ENCODE measurements at regions of chr1 and their contacts with region 1.

Region 1: DNA sequence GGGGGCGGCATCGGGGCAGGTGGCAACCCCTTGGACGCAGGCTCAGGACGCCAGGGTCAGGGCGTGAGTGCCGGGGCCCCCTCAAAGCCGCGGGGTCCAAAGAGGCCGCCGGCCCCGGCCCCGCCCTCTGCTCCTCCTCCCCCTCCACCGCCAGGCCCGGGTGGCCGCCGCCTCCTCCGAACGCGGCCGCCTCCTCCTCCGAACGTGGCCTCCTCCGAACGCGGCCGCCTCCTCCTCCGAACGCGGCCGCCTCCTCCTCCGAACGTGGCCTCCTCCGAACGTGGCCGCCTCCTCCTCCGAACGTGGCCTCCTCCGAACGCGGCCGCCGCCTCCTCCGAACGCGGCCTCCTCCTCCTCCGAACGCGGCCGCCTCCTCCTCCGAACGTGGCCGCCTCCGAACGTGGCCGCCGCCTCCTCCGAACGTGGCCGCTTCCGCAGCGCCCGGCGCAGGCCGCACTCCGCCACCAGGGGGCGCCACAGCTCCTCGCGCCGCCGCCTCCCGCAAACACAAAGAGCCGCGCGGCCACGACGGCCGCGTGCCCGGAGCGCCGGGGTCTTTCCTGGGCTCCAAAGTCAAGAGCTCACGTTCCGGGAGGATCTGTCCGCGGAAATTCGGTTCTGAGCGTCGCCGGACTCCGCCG is 19.3 kb upstream of the SAMD11 start:
- DNase-seq: peak; percentile 52 to 75 (median 68)
- H3K4me3 ChIP-seq: peak overlapping the region in 1 of 3 experiments; percentile 62
- H3K4me3 Mint-ChIP-seq: peak overlapping the region; percentile 74 to 81
- H3K27ac ChIP-seq: no peak overlapping the region
- H3K27ac Mint-ChIP-seq: peak overlapping the region in 1 of 7 donors; percentile 80
- H3K4me1 ChIP-seq: peaks cover 24 to 27% of the 10 kb centered on the region in 2 donors
- H3K4me1 Mint-ChIP-seq: peaks cover 19% of the 10 kb centered on the region
- H3K27me3 ChIP-seq: peaks cover 0 to 30% of the 10 kb centered on the region in 2 donors
- H3K27me3 Mint-ChIP-seq: peaks cover 34 to 57% (median 36%) of the 10 kb centered on the region in 3 donors
- CTCF ChIP-seq: peak; percentile 81

Region 2: GRCh38 chr1:960040-960756 is 55.8 kb after region 1 on chr1 and contains the start of gene KLHL17:
- intact Hi-C with region 1: loop called in 1 of 2 experiments (anchors 10 kb)
- DNase-seq: peak; percentile 46 to 54 (median 54)
- H3K4me3 ChIP-seq: peak within 1 kb of the TSS; percentile 34 to 94 (median 52)
- H3K4me3 Mint-ChIP-seq: peak within 1 kb of the TSS; percentile 73 to 95
- H3K27ac ChIP-seq: no peak within 1 kb of the TSS
- H3K27ac Mint-ChIP-seq: peak within 1 kb of the TSS in 3 of 7 donors; percentile 45 to 81 (median 55)
- H3K4me1 ChIP-seq: peaks cover 22 to 56% of the 10 kb centered on the region in 2 donors
- H3K4me1 Mint-ChIP-seq: peaks cover 36% of the 10 kb centered on the region
- H3K27me3 ChIP-seq: peaks cover 0 to 5% of the 10 kb centered on the region in 2 donors
- H3K27me3 Mint-ChIP-seq: peaks cover 4 to 22% (median 10%) of the 10 kb centered on the region in 3 donors
- CTCF ChIP-seq: no peak
- polyA plus RNA-seq, gene KLHL17: 0.31 to 48.1 (median 0.71) TPM

Region 3: GRCh38 chr1:975896-976683 is 71.7 kb after region 1 on chr1:
- intact Hi-C with region 1: loop called in 1 of 2 experiments (anchors 2 kb)
- DNase-seq: peak in 2 of 3 donors; percentile 44 to 63
- H3K4me3 ChIP-seq: no peak overlapping the region
- H3K4me3 Mint-ChIP-seq: peak overlapping the region; percentile 50 to 76
- H3K27ac ChIP-seq: no peak overlapping the region
- H3K27ac Mint-ChIP-seq: no peak overlapping the region
- H3K4me1 ChIP-seq: peaks cover 5 to 8% of the 10 kb centered on the region in 2 donors
- H3K4me1 Mint-ChIP-seq: peaks cover 3% of the 10 kb centered on the region
- H3K27me3 ChIP-seq: peaks cover 0 to 17% of the 10 kb centered on the region in 2 donors
- H3K27me3 Mint-ChIP-seq: peaks cover 14 to 37% (median 22%) of the 10 kb centered on the region in 3 donors
- CTCF ChIP-seq: peak; percentile 75

Region 4: GRCh38 chr1:992362-992761 is 87.9 kb after region 1 on chr1:
- intact Hi-C with region 1: no loop called
- DNase-seq: no peak
- H3K4me3 ChIP-seq: no peak overlapping the region
- H3K4me3 Mint-ChIP-seq: no peak overlapping the region
- H3K27ac ChIP-seq: no peak overlapping the region
- H3K27ac Mint-ChIP-seq: no peak overlapping the region
- H3K4me1 ChIP-seq: no peaks in the 10 kb centered on the region
- H3K4me1 Mint-ChIP-seq: peaks cover 4% of the 10 kb centered on the region
- H3K27me3 ChIP-seq: peaks cover 6 to 37% of the 10 kb centered on the region in 2 donors
- H3K27me3 Mint-ChIP-seq: peaks cover 54 to 81% (median 68%) of the 10 kb centered on the region in 3 donors
- CTCF ChIP-seq: no peak